Posterior vena cava (tissue), 2 donors: ENCODE measurements at regions of chr1 and their contacts with region 1.

Region 1: DNA sequence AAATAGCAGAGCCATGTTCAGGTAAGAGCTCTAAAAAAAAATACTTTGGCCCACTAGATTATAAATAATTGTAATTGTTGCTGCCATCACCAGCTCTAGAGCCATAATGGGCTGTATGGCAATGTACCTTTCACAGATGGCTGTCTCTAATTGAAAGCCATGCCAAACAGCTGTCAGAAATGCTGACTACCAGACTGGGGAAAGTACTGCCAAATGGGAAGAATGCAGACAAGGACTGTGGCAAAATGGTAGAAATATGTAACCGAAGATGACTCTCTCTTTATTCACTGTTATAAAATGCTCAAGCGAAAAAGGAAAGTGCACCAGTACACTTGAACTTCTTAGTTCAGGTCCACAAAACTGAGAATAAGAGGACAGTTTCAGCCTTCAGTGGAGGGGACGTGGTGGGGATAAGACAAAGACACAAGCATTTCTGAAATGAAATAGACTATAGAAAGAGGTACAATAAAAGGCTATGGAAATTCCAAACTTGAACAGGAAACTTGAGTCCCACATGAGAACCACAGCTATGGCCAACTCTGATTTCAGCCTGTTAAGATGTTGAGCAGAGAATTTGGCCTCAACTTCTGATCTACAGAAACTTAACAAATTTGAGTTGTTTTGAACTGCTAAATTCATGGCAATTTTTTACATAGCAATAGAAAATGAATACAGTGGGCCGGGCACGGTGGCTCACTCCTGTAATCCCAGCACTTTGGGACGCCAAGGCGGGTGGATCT is 46.5 kb upstream of the LPGAT1 start:
- DNase-seq: no peak

Region 2: DNA sequence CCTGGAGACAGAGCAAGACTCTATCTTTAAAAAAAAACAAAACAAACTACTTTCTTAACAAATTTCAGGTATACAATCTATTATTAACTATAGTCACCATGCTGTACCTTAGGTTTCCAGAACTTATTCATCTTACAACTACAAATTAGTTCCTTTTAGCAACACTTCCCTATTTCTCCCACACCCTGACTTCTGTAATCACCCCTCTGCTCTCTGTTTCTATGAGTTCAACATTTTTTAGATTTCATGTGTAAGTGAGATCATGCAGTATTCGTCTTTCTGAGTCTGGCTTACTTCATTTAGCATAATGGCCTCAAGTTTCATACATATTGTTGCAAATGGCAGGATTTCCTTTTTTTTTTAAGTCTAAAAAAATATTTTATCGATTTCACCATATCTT is 31.4 kb after region 1 on chr1:
- intact Hi-C with region 1: loop called in 1 of 2 experiments (anchors 1 kb)
- DNase-seq: no peak